Right ventricle myocardium inferior (tissue), 1 donor: ENCODE measurements at regions of chr15 and their contacts with region 1.

Region 1: GRCh38 chr15:100873029-100873677 is 6.5 kb upstream of the ALDH1A3 start:
- DNase-seq: no peak
- ATAC-seq: peak; percentile 62

Region 2: DNA sequence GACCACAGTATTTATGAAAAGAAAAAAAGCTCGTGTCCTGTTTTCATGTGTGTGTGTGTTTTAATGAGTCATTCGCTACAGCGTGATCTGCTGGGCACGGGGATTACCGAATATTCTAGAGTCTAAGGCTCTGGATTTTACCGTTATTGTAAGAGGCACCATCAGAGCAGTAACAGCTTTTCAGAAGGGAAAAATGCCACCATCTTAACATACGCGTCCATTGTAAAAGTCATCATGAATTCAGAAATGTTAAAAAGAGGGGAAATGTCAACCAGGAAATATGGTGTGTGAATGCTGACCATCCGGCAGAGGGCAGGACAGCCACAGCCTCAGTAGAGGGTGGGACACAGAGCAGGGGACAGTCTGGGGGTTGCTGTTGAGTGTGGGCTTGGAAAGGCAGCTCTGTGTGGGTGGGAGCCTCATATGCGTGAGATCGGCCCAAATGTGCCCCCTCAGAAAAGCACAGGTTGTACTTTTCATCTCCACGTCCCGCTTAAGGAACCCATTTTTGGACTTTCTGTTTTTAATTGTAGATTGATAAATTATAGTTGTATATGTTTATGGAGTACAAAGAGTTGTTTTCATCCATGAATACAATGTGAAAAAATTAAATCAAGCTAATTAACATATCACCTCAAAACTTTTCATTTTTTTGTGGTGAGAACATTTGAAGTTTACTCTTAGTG is 201.2 kb before region 1 on chr15:
- intact Hi-C with region 1: loop called (anchors 1 kb)
- DNase-seq: no peak
- ATAC-seq: peak; percentile 72

Region 3: GRCh38 chr15:100802421-100803170 is 70.6 kb before region 1 on chr15:
- intact Hi-C with region 1: no loop called
- DNase-seq: peak; percentile 42
- ATAC-seq: no peak